Ascending aorta (tissue), 2 donors: ENCODE measurements at regions of chr1 and their contacts with region 1.

Region 1: GRCh38 chr1:45490626-45491486 is at the start of gene TESK2:
- DNase-seq: peak; percentile 98 to 99
- H3K4me3 ChIP-seq: peak within 1 kb of the TSS; percentile 87 to 94
- H3K27ac ChIP-seq: peak within 1 kb of the TSS; percentile 59 to 79
- H3K4me1 ChIP-seq: peaks cover 3 to 9% of the 10 kb centered on the region in 2 donors
- H3K27me3 ChIP-seq: no peaks in the 10 kb centered on the region
- CTCF ChIP-seq: peak in 2 of 3 experiments; percentile 11 to 47
- total RNA-seq, gene TESK2: 0.32 TPM

Region 2: DNA sequence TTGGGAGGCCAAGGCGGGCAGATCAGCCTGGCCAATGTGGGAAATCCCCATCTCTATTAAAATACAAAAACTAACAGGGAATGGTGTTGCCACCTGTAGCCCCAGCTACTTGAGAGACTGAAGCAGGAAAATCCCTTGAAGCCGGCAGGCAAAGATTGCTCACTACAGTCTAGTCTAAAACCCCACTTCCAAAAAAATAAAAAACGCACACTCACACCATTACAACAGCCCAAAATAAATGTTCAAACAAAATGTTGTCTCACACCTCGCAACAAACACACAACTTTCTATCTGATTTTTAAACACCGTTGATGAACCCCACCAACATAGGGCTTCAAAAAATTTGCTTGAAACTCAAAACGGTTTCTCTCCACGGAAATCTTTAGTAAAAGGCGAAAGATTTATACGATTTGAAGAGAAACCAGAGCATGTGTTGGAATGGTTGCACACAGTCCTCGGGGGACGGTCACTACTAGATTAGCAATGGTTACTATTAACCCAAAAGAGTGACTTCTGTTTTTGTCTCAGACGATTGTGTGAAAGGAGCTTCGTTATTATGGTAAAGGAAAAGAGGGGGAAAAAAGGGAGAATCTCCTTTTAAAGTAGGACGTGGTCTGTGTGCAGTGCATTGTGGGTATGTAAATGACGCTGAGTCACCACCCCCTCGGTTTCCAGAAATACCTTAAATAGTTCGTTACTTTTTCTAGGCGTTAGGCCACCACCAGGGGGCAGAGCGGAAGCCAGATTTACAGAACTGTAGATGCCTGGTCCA is 759.9 kb before region 1 on chr1 and contains the start of gene RNU5D-1:
- intact Hi-C with region 1: loop called (anchors 2 kb)
- DNase-seq: peak; percentile 81 to 98
- H3K4me3 ChIP-seq: peak within 1 kb of the TSS in 1 of 2 donors; percentile 31
- H3K27ac ChIP-seq: peak within 1 kb of the TSS; percentile 84 to 92
- H3K4me1 ChIP-seq: peaks cover 5 to 15% of the 10 kb centered on the region in 2 donors
- H3K27me3 ChIP-seq: no peaks in the 10 kb centered on the region
- CTCF ChIP-seq: peak; percentile 70 to 76 (median 72)
- total RNA-seq, gene RNU5D-1: not detected

Region 3: DNA sequence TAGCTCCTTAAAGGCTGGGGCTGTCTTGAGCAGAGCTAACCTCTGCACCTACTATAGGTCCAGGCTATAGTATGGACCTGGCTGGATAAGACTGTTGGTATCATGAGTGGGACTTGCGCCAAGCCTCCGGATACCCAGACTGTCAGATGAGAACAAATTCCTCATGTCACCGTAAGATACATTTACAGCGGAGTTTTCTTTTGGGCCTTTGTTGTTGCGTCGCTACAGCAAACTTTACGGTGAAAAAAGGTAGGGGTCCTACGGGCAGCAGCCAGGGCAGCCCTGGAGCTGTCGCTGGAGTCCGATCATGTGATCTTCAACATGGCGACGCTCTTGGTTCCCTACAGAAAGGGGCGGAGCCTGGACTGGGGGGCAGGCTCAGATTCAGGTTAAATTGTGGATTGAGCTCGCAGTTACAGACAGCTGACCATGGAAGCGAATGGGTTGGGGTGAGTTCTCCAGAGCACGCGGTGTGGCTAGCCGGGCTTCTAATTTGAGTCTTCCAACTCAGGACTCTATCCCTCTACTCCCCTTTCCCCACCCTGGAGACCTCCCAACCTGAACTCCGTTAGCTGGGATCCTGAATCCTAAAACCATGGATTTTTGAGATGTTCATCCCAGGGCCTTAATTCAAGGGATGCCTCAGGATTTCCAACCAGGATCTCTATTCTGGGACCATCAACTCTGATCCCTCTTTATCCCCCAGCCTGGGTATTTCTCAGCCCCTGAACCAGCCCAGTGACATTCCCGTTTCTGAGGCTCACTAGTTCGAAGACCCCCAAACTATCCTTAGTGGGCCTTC is 478.8 kb before region 1 on chr1 and contains the start of gene UROD:
- intact Hi-C with region 1: loop called (anchors 2 kb)
- DNase-seq: peak; percentile 77 to 95
- H3K4me3 ChIP-seq: peak within 1 kb of the TSS; percentile 70 to 86
- H3K27ac ChIP-seq: peak within 1 kb of the TSS; percentile 65 to 81
- H3K4me1 ChIP-seq: peaks cover 20 to 31% of the 10 kb centered on the region in 2 donors
- H3K27me3 ChIP-seq: no peaks in the 10 kb centered on the region
- CTCF ChIP-seq: no peak
- total RNA-seq, gene UROD: 150 TPM

Region 4: DNA sequence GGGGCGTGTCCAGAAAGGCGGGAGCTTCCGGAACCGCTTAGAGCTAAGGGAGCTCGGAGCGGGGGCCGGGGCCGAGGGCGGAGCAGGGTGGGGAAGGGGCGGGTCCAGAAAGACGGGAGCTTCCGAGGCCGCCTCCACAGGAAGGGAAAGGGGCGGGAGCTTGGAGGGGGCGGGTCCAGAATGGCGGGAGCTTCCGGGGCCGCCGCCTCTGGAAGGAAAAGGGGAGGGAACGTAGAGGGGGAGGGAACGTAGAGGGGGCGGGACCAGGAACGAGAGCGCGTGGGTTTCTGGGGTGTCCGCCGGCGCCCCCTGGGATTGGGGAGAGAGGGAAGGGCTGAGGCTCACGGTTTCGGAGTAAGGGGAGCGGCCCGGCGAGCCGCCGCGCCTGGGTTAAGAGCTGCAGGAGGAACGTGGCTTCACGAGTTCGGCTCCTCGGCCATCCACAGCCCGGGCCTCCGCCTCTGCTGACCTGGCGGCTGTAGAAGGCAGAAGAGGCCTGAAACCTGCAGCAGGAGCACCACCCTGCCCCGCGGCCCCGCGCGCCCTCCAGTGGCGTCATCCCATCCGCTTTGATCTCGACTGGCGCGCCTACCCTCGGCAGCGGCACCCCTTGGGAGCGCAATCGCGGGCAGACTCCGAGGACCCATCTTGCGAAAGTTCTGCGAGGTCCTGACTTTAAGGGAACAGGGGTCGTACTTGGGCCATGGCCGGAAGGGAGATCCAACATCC is 187.1 kb before region 1 on chr1:
- intact Hi-C with region 1: loop called (anchors 1 kb)
- DNase-seq: peak; percentile 89 to 99
- H3K4me3 ChIP-seq: peak overlapping the region; percentile 69 to 80
- H3K27ac ChIP-seq: peak overlapping the region; percentile 82 to 88
- H3K4me1 ChIP-seq: peaks cover 0 to 3% of the 10 kb centered on the region in 2 donors
- H3K27me3 ChIP-seq: no peaks in the 10 kb centered on the region
- CTCF ChIP-seq: peak; percentile 52 to 77 (median 65)

Region 5: GRCh38 chr1:45359882-45360513 is 130.9 kb before region 1 on chr1:
- intact Hi-C with region 1: loop called (anchors 1 kb)
- DNase-seq: peak in 1 of 2 donors; percentile 83
- H3K4me3 ChIP-seq: peak overlapping the region in 1 of 2 donors; percentile 43
- H3K27ac ChIP-seq: peak overlapping the region; percentile 63 to 77
- H3K4me1 ChIP-seq: peaks cover 4 to 8% of the 10 kb centered on the region in 2 donors
- H3K27me3 ChIP-seq: no peaks in the 10 kb centered on the region
- CTCF ChIP-seq: peak; percentile 66 to 79 (median 75)

Region 6: GRCh38 chr1:45444609-45445171 is 46.2 kb before region 1 on chr1:
- intact Hi-C with region 1: no loop called
- DNase-seq: no peak
- H3K4me3 ChIP-seq: no peak overlapping the region
- H3K27ac ChIP-seq: no peak overlapping the region
- H3K4me1 ChIP-seq: no peaks in the 10 kb centered on the region
- H3K27me3 ChIP-seq: no peaks in the 10 kb centered on the region
- CTCF ChIP-seq: no peak

Region 7: GRCh38 chr1:45550401-45551351 is 59.8 kb after region 1 on chr1 and contains the start of gene AKR1A1:
- intact Hi-C with region 1: loop called (anchors 2 kb)
- DNase-seq: peak; percentile 63 to 93
- H3K4me3 ChIP-seq: peak within 1 kb of the TSS; percentile 66 to 78
- H3K27ac ChIP-seq: peak within 1 kb of the TSS; percentile 82 to 84
- H3K4me1 ChIP-seq: peaks cover 0 to 5% of the 10 kb centered on the region in 2 donors
- H3K27me3 ChIP-seq: no peaks in the 10 kb centered on the region
- CTCF ChIP-seq: peak in 1 of 3 experiments; percentile 8
- total RNA-seq, gene AKR1A1: 77.5 TPM

Region 8: GRCh38 chr1:45803301-45803780 is 312.5 kb after region 1 on chr1 and contains the start of gene MAST2:
- intact Hi-C with region 1: loop called (anchors 10 kb)
- DNase-seq: peak; percentile 45 to 93
- H3K4me3 ChIP-seq: peak within 1 kb of the TSS; percentile 76 to 84
- H3K27ac ChIP-seq: peak within 1 kb of the TSS; percentile 79 to 91
- H3K4me1 ChIP-seq: peaks cover 11 to 13% of the 10 kb centered on the region in 2 donors
- H3K27me3 ChIP-seq: no peaks in the 10 kb centered on the region
- CTCF ChIP-seq: no peak
- total RNA-seq, gene MAST2: 61.0 TPM